GM12878 (cell line): ENCODE measurements at regions of chr7 and their contacts with region 1.

Region 1: GRCh38 chr7:28722684-28723083 is 235.4 kb downstream of the TRIL start:
- DNase-seq: no peak
- ATAC-seq: no peak
- H3K4me3 ChIP-seq: no peak overlapping the region
- H3K27ac ChIP-seq: no peak overlapping the region
- H3K4me1 ChIP-seq: no peaks in the 10 kb centered on the region
- H3K27me3 ChIP-seq: no peaks in the 10 kb centered on the region
- CTCF ChIP-seq: no peak
- EP300 ChIP-seq: no peak
- POLR2A ChIP-seq: no peak
- RAD21 ChIP-seq: no peak

Region 2: GRCh38 chr7:27910326-27910725 is 812.4 kb before region 1 on chr7:
- CTCF ChIA-PET with region 1: no interaction called
- POLR2A ChIA-PET with region 1: no interaction called
- RAD21 ChIA-PET with region 1: no interaction called
- SMC1A ChIA-PET with region 1: no interaction called
- in situ Hi-C with region 1: no loop called
- intact Hi-C with region 1: no loop called
- DNase-seq: no peak
- ATAC-seq: no peak
- H3K4me3 ChIP-seq: no peak overlapping the region
- H3K27ac ChIP-seq: no peak overlapping the region
- H3K4me1 ChIP-seq: no peaks in the 10 kb centered on the region
- H3K27me3 ChIP-seq: peaks cover 1 to 3% of the 10 kb centered on the region in 2 experiments; a peak in 1 of 4 replicates
- CTCF ChIP-seq: no peak
- EP300 ChIP-seq: no peak
- POLR2A ChIP-seq: no peak
- RAD21 ChIP-seq: no peak

Region 3: GRCh38 chr7:28708033-28708951 is 14.4 kb before region 1 on chr7:
- CTCF ChIA-PET with region 1: interaction called, 7 read pairs
- POLR2A ChIA-PET with region 1: no interaction called
- RAD21 ChIA-PET with region 1: no interaction called
- SMC1A ChIA-PET with region 1: interaction called, 17 read pairs
- in situ Hi-C with region 1: no loop called
- intact Hi-C with region 1: no loop called
- DNase-seq: no peak
- ATAC-seq: no peak
- H3K4me3 ChIP-seq: no peak overlapping the region
- H3K27ac ChIP-seq: no peak overlapping the region
- H3K4me1 ChIP-seq: peaks cover 16% of the 10 kb centered on the region
- H3K27me3 ChIP-seq: no peaks in the 10 kb centered on the region
- CTCF ChIP-seq: no peak
- EP300 ChIP-seq: no peak
- POLR2A ChIP-seq: no peak
- RAD21 ChIP-seq: no peak